ENCODE measurements at regions of chr16 and their contacts with region 1.

Region 1: DNA sequence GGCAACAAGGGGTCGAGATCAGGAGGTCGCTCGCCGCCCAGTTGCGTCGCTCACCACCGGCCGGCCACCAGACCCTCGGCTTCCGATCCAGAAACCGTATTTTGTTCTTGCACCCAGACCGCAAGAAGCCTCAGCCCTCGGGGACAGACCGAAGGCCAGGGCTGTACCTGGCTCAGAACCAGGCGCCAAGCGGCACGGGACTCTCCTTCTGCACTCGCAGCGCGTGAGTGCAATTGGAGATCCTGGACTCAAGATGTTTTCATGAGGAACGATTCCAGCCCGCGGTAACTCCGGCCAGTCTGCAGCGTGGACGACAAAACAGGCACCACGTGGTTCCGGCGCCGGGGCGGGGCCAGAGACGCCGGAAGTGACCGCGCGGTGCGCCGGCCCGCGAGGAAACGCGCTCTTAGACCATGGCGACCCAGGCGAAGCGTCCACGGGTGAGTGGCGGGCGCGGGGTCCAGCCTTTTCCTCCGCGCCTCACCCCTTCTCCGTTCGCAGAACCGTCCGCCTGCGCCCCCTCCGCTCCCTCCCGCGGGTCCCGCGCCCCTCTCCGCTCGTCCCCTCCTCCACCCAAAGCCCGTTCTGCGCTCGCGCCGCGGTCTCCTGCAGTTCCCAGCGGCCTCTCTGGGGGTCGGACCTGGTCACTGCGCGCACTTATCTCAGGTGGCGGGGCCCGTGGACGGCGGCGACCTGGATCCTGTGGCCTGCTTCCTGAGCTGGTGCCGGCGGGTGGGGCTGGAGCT is at the start of gene SETD6:
- DNase-seq: peak; percentile 90 to 95 (median 94)
- ATAC-seq: peak; percentile 94 to 95
- H3K4me3 ChIP-seq: peak within 1 kb of the TSS; percentile 56
- H3K27ac ChIP-seq: peak within 1 kb of the TSS; percentile 31
- H3K4me1 ChIP-seq: peaks cover 5% of the 10 kb centered on the region
- H3K27me3 ChIP-seq: no peaks in the 10 kb centered on the region
- total RNA-seq, gene SETD6: 9.7 to 12.4 (median 11.1) TPM

Region 2: DNA sequence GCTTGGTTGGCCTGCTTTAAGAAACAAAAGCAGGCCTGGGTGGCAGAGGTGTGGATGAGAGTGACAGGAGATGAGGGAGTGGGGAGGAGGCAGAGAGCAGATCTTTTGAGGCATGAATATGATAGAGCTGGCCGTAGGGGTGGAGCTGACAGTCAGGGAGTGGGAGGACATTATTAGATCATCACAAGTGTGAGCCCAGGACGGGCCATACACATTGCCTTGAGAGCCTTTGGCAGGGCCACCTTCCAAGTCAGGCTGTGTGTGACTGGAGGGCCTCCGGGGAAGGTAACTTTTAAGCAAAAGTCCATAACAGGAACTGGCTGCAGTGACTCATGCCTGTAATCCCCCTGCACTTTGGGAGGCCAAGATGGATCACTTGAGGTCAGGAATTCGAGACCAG is 96.7 kb before region 1 on chr16:
- intact Hi-C with region 1: no loop called
- DNase-seq: peak; percentile 57 to 79 (median 69)
- ATAC-seq: peak; percentile 83 to 88
- H3K4me3 ChIP-seq: no peak overlapping the region
- H3K27ac ChIP-seq: peak overlapping the region; percentile 98
- H3K4me1 ChIP-seq: no peaks in the 10 kb centered on the region
- H3K27me3 ChIP-seq: no peaks in the 10 kb centered on the region

Region 3: DNA sequence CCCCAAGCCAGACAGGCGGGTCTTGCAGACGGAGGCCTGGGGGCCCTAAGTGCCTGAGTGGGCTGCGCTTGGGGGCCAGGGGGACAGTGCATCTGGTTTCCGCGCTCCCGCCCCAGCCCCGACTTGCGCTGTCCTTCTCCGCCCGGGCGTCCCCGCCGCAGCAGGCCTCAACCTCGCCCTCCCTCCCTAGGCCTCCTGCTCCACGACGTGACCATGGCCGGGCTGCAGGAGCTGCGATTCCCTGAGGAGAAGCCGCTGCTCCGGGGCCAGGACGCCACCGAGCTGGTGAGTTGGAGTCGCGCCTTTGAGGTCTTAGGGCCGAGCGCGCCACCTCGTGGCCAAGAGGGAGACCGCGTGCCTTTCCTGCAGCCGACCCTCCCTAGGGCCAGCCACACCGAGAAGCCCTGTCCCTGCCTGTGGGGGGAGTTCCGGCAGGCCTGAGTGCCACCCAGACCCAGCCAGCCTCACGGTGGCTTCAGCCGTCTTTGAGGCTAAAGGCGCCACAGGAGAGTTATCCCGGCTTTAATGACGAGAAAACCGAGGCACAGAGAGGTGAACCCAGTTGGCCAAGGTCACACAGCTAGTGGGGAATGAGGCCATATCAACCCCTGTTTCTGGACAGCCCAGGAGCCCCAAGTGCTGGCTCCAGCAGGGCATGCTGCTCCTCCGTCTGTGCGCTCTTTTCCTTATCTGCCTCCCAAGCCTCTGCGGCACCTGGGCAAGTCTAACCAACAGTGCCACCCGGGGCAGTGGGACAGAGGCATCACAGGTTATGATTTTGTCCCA is 27.5 kb before region 1 on chr16:
- intact Hi-C with region 1: no loop called
- DNase-seq: peak; percentile 89 to 95 (median 94)
- ATAC-seq: peak; percentile 78 to 88
- H3K4me3 ChIP-seq: no peak overlapping the region
- H3K27ac ChIP-seq: no peak overlapping the region
- H3K4me1 ChIP-seq: peaks cover 3% of the 10 kb centered on the region
- H3K27me3 ChIP-seq: no peaks in the 10 kb centered on the region

Region 4: GRCh38 chr16:58629572-58630104 is 114.3 kb after region 1 on chr16 and contains the start of gene CNOT1:
- intact Hi-C with region 1: loop called in 1 of 4 experiments (anchors 10 kb)
- DNase-seq: peak; percentile 98 to 99 (median 99)
- ATAC-seq: peak; percentile 97 to 98
- H3K4me3 ChIP-seq: peak within 1 kb of the TSS; percentile 92
- H3K27ac ChIP-seq: peak within 1 kb of the TSS; percentile 98
- H3K4me1 ChIP-seq: no peaks in the 10 kb centered on the region
- H3K27me3 ChIP-seq: no peaks in the 10 kb centered on the region
- total RNA-seq, gene CNOT1: 54.3 to 85.8 (median 79.9) TPM

Region 5: DNA sequence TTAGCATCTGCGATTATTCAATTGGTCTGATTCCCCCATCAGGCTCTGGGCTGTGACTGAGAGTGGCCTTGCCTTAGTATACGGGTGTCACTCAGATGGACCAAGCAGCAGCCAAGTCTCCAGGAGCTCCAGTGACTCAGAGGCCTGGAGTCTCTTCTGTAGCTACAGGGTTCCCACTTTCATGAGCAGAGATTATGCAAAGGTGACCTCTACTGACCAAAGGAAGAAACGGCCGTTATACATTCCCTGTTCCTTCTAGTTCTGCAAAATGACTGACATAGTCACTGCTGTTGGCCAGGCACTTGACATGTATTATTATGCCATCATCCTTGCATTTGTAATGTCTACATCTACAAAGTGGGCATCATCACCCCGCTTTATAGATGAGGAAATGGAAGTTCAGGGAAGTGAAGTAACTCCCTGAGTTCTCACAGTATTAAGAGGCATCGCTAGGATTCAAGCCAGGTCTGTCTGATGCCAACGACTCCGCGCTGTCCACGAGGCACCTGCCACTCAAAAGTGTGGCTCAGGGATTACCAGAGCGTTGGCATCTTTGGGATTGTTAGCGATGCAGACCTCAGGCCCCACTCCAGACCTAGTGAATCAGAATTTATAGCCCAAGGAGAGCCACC is 146.0 kb after region 1 on chr16:
- intact Hi-C with region 1: loop called in 2 of 4 experiments (anchors 10 kb)
- DNase-seq: peak; percentile 45 to 66 (median 53)
- ATAC-seq: peak; percentile 91 to 93
- H3K4me3 ChIP-seq: no peak overlapping the region
- H3K27ac ChIP-seq: no peak overlapping the region
- H3K4me1 ChIP-seq: no peaks in the 10 kb centered on the region
- H3K27me3 ChIP-seq: no peaks in the 10 kb centered on the region

Measured in right cardiac atrium (tissue), 5 donors.